Activated CD4-positive, alpha-beta memory T cell treated with anti-CD3 and anti-CD28 coated beads for 36 hours (primary cell): ENCODE measurements at regions of chr19 and their contacts with region 1.

Region 1: DNA sequence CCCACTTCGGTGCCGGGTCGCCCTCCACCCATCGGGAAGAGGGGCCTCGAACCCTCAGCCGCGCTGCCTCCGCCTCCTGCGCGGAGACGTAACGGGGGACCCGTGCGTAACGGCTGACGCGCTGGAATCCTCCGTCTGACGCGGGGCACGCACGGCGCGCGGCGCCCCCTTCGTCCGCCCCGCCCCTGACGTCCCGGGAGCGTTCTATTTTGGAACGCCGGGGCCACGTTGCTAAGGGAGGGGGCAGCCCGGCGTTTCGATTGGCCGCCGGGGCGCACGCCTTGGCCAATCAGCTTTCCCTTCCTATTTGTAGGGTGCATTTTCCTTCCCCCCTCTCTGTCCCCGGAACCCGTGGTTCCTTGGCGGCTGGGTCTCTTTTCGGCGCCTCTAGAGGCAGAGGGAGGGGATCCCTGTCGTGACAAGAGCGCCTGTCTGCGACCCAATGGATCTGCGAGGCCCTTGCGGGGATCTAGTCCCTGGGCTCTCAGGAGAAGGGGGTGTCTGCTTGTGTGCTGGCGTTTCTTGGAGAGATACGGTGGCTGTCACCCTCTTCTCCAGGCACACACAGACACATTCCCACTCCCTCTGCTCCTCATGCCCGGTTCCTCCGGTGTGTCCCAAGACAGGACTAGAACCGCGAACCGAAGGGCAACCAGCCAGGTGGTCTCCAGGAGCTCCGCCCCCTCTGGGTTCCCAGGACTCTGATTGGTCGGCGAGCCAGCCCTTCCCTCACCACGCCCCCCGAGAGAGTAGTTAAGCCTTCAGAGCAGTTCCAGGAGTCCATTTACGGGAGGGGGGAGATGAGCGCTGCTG is 1.5 kb downstream of the FOSB start:
- DNase-seq: peak; percentile 96
- H3K4me3 Mint-ChIP-seq: peak overlapping the region; percentile 87
- H3K27ac Mint-ChIP-seq: peak overlapping the region; percentile 84
- H3K4me1 Mint-ChIP-seq: peaks cover 33% of the 10 kb centered on the region
- H3K27me3 Mint-ChIP-seq: peaks cover 1% of the 10 kb centered on the region

Region 2: DNA sequence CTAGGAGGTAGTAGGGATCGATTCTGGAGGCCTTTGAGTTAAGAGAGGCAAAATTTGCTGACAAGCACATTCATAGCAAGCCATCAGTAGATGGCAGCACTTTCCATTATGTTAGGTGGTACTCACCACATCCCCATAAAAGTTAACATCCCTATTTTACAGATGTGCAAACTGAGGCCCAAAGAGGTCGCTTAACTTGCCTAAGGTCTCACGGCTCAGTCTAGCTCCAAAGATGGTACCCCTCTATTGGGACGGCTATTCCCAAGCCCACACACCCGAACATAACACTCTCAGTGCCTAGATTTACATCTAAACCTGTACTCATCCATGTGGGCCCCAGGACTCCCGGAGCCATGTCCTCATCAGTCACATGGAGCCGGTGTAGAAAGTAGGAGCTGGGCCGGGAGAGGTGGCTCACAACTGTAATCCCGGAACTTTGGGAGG is 23.0 kb before region 1 on chr19:
- CTCF ChIA-PET with region 1: interaction called, 420 read pairs
- POLR2A ChIA-PET with region 1: interaction called, 21 read pairs
- intact Hi-C with region 1: loop called (anchors 1 kb)
- DNase-seq: no peak
- H3K4me3 Mint-ChIP-seq: no peak overlapping the region
- H3K27ac Mint-ChIP-seq: no peak overlapping the region
- H3K4me1 Mint-ChIP-seq: peaks cover 54% of the 10 kb centered on the region
- H3K27me3 Mint-ChIP-seq: no peaks in the 10 kb centered on the region

Region 3: DNA sequence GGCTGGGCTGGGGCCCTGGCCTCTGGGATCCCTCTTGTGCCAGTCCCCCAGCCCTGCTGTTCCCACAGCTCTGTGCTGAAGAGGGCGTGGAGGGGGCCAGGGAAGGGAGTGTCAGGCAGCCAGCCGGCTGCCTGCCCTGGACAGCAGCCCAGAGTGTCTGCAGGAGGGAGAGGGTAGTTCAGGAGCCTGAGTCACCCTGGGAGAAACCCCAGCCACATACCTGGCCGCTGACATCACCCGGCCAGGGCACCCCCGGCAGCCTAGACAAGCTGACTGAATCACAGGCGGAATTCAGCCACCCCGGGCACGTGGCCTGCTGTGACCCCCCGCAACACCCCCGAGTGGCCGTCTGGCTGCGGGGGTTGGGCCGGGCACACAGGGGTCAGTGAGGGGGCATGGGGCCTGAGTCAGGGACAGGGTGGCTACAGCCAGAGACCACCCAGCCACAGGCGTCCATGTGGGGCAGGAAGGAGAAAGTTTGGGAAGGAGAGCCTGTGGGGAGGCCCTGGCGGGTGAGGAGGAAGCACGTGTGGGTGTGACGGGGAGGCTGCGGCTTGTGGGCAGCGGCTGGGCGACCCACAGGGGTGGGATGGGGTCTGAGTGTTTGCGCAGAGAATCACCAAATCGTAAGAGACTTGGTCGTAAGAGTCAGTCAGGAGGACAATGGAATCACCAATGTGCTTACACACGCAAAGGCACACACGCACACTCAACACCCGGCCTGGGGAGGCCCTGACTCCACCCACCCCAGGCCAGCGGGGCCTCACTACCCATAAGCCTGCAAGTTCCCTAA is 13.4 kb before region 1 on chr19:
- CTCF ChIA-PET with region 1: interaction called, 3 read pairs
- POLR2A ChIA-PET with region 1: interaction called, 18 read pairs
- intact Hi-C with region 1: no loop called
- DNase-seq: peak; percentile 84
- H3K4me3 Mint-ChIP-seq: no peak overlapping the region
- H3K27ac Mint-ChIP-seq: peak overlapping the region; percentile 56
- H3K4me1 Mint-ChIP-seq: peaks cover 29% of the 10 kb centered on the region
- H3K27me3 Mint-ChIP-seq: no peaks in the 10 kb centered on the region

Region 4: DNA sequence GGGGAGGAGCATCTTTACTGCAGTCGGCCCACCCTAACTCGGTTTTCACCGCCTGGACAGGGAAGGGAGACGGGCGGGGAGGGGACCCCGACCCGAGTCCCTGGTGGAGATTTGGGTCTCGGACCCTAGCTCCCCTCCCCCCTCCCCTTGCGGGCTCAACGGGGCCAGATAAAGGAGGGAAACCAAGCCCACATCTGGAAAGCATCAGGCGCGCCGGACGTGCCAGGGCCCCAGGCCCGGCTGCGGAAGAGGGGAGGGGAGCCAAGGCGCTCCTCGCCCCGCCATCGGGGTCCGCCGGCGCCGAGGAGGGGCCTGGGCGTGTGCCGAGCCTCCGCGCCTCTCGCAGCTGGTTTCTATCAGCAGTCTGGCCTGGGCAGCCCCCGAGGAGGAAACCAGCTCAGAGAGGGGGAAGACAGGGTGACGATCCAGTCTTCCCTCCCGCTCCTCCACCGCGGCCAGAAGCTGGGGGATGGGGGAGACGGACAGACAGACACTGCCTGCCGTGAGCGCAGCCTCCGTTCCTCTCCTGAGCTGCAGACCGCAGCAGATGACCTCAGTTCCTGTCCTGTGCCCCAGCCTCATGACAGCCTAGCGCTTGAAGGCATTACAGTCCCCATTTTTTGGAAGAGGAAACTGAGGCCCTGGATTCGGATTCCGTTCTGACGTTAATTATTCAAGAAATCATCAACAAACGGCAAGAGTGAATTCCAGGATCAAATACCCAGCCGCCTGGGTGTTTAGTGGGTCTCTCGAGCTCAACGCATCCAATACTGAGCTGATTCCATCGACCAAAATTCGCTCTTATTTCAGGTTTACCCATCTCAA is 1170.2 kb after region 1 on chr19:
- CTCF ChIA-PET with region 1: no interaction called
- POLR2A ChIA-PET with region 1: no interaction called
- intact Hi-C with region 1: no loop called
- DNase-seq: peak; percentile 70
- H3K4me3 Mint-ChIP-seq: no peak overlapping the region
- H3K27ac Mint-ChIP-seq: no peak overlapping the region
- H3K4me1 Mint-ChIP-seq: peaks cover 7% of the 10 kb centered on the region
- H3K27me3 Mint-ChIP-seq: peaks cover 3% of the 10 kb centered on the region